Right cardiac atrium (tissue), 5 donors: ENCODE measurements at regions of chr15 and their contacts with region 1.

Region 1: GRCh38 chr15:32844118-32844711 is 126.4 kb downstream of the GREM1 start:
- DNase-seq: no peak
- ATAC-seq: no peak
- H3K4me3 ChIP-seq: no peak overlapping the region
- H3K27ac ChIP-seq: no peak overlapping the region
- H3K4me1 ChIP-seq: no peaks in the 10 kb centered on the region
- H3K27me3 ChIP-seq: no peaks in the 10 kb centered on the region

Region 2: DNA sequence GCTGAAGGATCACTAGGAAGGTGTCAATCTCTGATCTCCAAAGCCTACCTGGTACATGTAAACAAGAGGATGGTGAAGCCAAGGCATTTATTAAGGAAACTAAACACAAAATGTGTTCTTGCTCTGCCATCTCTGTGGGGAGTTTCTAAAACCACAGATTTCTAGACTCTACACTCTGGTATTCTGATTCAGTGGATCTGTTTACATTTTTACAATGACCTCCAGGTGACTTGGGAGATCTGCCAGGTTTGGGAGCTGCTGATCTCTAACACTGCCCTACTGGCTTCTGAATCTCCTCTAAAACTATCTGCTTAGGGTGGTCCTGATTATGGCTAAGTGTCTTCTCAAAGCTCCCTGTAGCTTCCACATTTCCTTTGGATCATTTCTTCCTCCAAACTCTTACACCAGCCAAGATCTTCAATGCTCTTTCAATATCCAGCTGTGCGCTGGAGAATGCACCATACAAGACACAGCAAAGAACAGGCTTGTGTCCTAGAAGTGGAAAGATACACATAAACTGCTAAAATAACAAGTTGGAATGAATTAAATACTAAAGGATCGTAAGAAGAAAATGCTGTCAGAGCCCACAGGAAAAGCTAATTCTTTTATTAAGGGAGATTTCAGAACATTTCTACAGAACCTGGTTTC is 53.7 kb before region 1 on chr15:
- intact Hi-C with region 1: no loop called
- DNase-seq: no peak
- ATAC-seq: no peak
- H3K4me3 ChIP-seq: no peak overlapping the region
- H3K27ac ChIP-seq: no peak overlapping the region
- H3K4me1 ChIP-seq: no peaks in the 10 kb centered on the region
- H3K27me3 ChIP-seq: no peaks in the 10 kb centered on the region

Region 3: DNA sequence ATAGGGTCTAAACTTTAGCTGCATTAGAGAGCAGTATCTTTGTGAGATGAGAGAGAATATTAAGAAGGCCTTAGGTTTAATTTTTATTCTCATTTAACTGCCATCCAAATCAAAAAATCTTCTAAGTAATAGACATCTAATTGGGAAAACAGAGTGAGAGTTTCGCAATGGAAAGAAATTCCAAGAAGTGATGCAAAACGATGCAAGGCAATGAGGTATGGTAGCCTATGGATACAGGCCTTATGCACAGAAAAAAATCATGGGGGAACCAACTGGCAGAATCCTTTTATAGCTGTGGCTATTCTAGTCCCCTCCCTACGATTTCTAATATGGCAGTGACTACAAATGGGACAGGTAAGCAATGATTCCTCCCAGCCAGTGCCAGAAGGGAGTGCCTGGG is 99.5 kb after region 1 on chr15:
- intact Hi-C with region 1: no loop called
- DNase-seq: no peak
- ATAC-seq: no peak
- H3K4me3 ChIP-seq: no peak overlapping the region
- H3K27ac ChIP-seq: no peak overlapping the region
- H3K4me1 ChIP-seq: peaks cover 2% of the 10 kb centered on the region
- H3K27me3 ChIP-seq: no peaks in the 10 kb centered on the region

Region 4: DNA sequence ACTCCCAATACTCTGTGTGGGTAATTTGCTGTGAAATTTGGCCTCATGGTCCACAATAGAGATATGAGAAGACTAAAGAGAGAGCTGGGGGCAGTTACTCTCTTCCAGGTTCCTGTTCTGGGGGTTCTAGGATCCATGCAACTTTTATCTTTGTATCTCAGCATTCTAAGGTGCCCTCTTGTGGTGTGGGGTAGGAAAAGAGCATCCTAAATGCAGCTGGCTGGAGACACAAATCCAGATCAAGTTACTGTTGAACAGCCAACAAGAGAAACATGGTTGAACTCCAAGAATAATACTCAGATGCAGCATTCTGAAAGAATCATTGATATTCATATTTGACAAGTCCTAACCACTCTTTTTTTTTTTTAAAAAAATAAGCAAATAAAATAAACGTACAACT is 111.8 kb after region 1 on chr15:
- intact Hi-C with region 1: loop called in 1 of 4 experiments (anchors 10 kb)
- DNase-seq: no peak
- ATAC-seq: peak; percentile 13 to 68
- H3K4me3 ChIP-seq: no peak overlapping the region
- H3K27ac ChIP-seq: no peak overlapping the region
- H3K4me1 ChIP-seq: peaks cover 4% of the 10 kb centered on the region
- H3K27me3 ChIP-seq: no peaks in the 10 kb centered on the region